ENCODE measurements at regions of chr3 and their contacts with region 1.

Region 1: DNA sequence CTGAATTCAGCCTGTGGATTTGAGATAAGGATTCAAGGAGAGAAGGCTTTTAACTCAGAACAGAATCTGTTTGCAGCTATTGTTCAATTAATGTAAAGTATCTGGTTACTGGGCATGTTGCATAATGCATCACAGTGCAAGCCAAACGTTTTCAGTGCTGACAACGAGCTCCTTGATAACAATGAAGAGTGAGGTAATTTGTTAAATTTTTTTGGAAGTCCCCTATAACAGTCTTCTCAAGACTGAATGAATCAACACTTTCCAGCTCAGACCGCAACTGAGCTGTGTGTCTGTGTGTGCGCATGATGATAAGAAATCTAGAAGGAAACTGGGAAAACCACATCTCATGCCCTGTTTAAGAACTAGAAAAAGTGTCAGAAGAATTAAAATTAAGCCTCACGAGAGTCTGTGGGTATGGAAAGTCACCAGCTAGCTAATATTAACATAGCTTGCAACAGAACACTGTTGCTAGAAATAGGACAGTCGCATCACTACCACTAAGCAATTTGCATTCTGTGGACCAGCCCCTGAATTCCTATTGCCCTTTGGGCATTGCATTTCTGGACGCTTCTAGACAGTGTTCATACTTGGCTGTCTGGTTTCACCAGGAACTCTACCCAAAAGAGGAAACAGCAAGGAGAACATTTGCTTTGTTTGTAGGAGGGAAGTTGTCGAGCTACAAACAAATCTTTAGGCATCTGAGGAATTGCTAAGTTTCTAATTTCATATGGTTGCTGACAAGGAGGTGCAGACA is 43.7 kb upstream of the ATP2C1 start:
- DNase-seq: peak; percentile 72
- H3K4me3 Mint-ChIP-seq: peak overlapping the region; percentile 74
- H3K27ac Mint-ChIP-seq: peak overlapping the region; percentile 96
- H3K4me1 Mint-ChIP-seq: peaks cover 54% of the 10 kb centered on the region
- H3K27me3 Mint-ChIP-seq: no peaks in the 10 kb centered on the region
- CTCF ChIP-seq: no peak

Region 2: GRCh38 chr3:130759699-130760338 is 90.4 kb before region 1 on chr3:
- CTCF ChIA-PET with region 1: interaction called, 12 read pairs
- intact Hi-C with region 1: loop called (anchors 2 kb)
- DNase-seq: peak; percentile 85
- H3K4me3 Mint-ChIP-seq: no peak overlapping the region
- H3K27ac Mint-ChIP-seq: no peak overlapping the region
- H3K4me1 Mint-ChIP-seq: peaks cover 29% of the 10 kb centered on the region
- H3K27me3 Mint-ChIP-seq: no peaks in the 10 kb centered on the region
- CTCF ChIP-seq: peak; percentile 93

Region 3: GRCh38 chr3:130783629-130784028 is 66.6 kb before region 1 on chr3:
- CTCF ChIA-PET with region 1: interaction called, 4 read pairs
- intact Hi-C with region 1: loop called (anchors 2 kb)
- DNase-seq: peak; percentile 51
- H3K4me3 Mint-ChIP-seq: peak overlapping the region; percentile 24
- H3K27ac Mint-ChIP-seq: peak overlapping the region; percentile 91
- H3K4me1 Mint-ChIP-seq: peaks cover 50% of the 10 kb centered on the region
- H3K27me3 Mint-ChIP-seq: no peaks in the 10 kb centered on the region
- CTCF ChIP-seq: no peak

Region 4: DNA sequence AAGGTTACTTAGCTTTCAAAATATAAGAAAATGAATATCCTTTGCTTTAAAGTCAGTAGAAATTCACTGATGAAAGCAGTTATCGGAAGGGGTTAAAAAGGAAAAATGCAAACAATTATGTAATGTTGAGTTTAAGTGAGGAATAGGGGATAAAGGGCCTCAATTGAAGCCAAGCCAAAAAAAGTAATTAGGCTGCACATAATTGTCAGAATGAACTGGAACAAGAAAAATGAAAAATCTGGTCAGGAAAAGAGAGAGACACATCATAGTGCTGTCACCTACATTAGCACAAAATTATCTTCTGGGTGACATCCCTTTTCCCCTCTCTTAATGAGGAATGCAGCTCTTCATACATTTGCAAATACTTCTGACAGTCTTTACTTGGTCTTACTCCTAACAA is 54.8 kb before region 1 on chr3:
- CTCF ChIA-PET with region 1: no interaction called
- intact Hi-C with region 1: no loop called
- DNase-seq: no peak
- H3K4me3 Mint-ChIP-seq: no peak overlapping the region
- H3K27ac Mint-ChIP-seq: no peak overlapping the region
- H3K4me1 Mint-ChIP-seq: peaks cover 11% of the 10 kb centered on the region
- H3K27me3 Mint-ChIP-seq: no peaks in the 10 kb centered on the region
- CTCF ChIP-seq: no peak

Region 5: GRCh38 chr3:130820976-130821375 is 29.2 kb before region 1 on chr3:
- CTCF ChIA-PET with region 1: interaction called, 3 read pairs
- intact Hi-C with region 1: loop called (anchors 2 kb)
- DNase-seq: peak; percentile 89
- H3K4me3 Mint-ChIP-seq: peak overlapping the region; percentile 37
- H3K27ac Mint-ChIP-seq: peak overlapping the region; percentile 98
- H3K4me1 Mint-ChIP-seq: peaks cover 73% of the 10 kb centered on the region
- H3K27me3 Mint-ChIP-seq: no peaks in the 10 kb centered on the region
- CTCF ChIP-seq: no peak